PC-3 (cell line): ENCODE measurements at regions of chr12 and their contacts with region 1.

Region 1: GRCh38 chr12:110431957-110432587 is 18.1 kb downstream of the ARPC3 start:
- DNase-seq: no peak
- ATAC-seq: no peak
- H3K4me3 ChIP-seq: peak overlapping the region; percentile 78
- H3K27ac ChIP-seq: no peak overlapping the region
- H3K4me1 ChIP-seq: peaks cover 5% of the 10 kb centered on the region; the same call in 1 of the 2 replicates
- H3K27me3 ChIP-seq: no peaks in the 10 kb centered on the region
- CTCF ChIP-seq: no peak

Region 2: DNA sequence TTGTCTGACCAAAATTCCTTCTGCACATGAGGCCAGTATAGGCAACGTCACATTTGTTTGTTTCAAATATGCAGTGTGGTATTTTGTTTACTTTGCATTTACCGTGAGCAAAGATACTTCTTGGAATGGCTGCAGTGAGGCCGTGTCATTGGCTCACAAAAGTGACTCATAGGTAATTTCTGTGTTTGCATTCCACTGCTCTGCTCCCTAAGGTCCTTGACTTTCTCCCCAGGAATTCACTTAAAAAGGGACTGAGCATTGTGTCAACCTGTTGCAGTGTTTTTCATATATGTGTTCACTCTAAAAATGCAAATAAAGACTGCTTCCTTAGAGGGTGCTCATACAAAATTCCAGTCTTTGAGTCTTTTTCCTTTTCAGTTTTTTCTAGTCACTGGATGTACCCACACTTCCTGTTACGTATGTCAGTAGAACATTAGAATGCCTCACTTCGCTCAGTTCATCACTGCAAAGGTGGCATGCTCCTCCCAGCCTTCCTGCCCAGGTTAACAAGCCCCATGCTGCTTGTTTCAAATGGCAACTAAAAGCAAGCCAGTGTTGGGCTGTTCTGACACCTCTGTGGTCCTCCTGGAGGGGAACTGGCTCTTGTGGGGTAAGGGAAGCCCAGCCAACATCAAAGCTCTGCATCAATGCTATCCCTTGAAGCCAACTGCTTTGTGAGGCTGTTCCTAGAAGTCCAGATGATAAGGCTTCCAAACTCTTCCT is 392.8 kb before region 1 on chr12:
- CTCF ChIA-PET with region 1: interaction called, 6 read pairs
- POLR2A ChIA-PET with region 1: no interaction called
- intact Hi-C with region 1: loop called (anchors 5 kb)
- DNase-seq: peak; percentile 98
- ATAC-seq: peak; percentile 94
- H3K4me3 ChIP-seq: peak overlapping the region; percentile 43
- H3K27ac ChIP-seq: peak overlapping the region; percentile 92
- H3K4me1 ChIP-seq: peaks cover 31% of the 10 kb centered on the region
- H3K27me3 ChIP-seq: no peaks in the 10 kb centered on the region
- CTCF ChIP-seq: no peak

Region 3: GRCh38 chr12:110109037-110109836 is 322.8 kb before region 1 on chr12:
- CTCF ChIA-PET with region 1: interaction called, 14 read pairs
- POLR2A ChIA-PET with region 1: no interaction called
- intact Hi-C with region 1: no loop called
- DNase-seq: peak; percentile 96
- ATAC-seq: peak; percentile 94
- H3K4me3 ChIP-seq: peak overlapping the region; percentile 52
- H3K27ac ChIP-seq: peak overlapping the region; percentile 93
- H3K4me1 ChIP-seq: peaks cover 26% of the 10 kb centered on the region
- H3K27me3 ChIP-seq: no peaks in the 10 kb centered on the region
- CTCF ChIP-seq: no peak

Region 4: DNA sequence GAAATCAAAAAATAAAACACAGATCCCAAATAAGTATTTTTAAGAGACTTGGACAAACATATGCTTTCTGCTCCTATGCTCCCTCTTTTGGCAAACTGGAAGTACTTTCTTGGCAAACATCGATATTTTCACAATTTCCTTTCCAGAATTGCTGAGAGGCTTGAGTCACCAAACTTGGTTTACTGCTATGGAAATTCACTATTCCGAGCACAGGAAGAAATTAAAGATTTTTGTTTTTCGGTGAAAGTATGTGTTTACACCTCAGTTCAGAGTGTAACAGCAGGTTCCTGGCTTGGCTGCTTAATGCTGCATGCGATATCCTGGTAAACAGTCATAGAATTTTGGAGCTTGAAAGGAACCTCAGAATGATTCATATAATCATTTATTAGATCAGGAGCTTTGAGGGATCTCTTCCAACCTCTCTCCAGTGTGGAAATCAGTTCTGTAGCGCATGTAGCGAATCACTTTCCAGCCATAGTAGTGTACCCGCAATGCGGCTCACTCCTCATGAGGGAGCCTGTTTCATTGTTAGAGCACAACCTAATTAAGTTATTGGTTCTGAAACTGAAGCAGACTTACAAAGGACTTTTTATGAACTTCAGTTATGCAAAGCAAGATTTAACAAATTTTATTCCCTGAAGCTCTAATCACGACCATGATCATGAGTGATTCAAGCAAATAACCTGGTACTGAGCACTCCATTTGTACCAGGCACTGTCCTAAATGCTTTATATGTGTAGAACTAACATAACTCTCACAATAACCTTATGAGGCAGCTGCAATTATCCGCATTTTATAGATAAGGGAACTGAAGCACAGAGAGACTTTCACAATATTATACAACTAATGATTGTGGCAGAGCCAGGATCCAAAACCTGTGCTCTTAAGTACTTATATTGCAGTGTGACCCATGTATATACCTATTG is 207.4 kb before region 1 on chr12:
- CTCF ChIA-PET with region 1: interaction called, 11 read pairs
- POLR2A ChIA-PET with region 1: no interaction called
- intact Hi-C with region 1: no loop called
- DNase-seq: peak; percentile 91
- ATAC-seq: peak; percentile 65
- H3K4me3 ChIP-seq: peak overlapping the region; percentile 64
- H3K27ac ChIP-seq: peak overlapping the region; percentile 91
- H3K4me1 ChIP-seq: peaks cover 27% of the 10 kb centered on the region
- H3K27me3 ChIP-seq: no peaks in the 10 kb centered on the region
- CTCF ChIP-seq: peak; percentile 80

Region 5: GRCh38 chr12:110316861-110317260 is 115.2 kb before region 1 on chr12:
- CTCF ChIA-PET with region 1: no interaction called
- POLR2A ChIA-PET with region 1: interaction called, 13 read pairs
- intact Hi-C with region 1: no loop called
- DNase-seq: peak; percentile 17
- ATAC-seq: no peak; the same call in 1 of the 2 replicates
- H3K4me3 ChIP-seq: no peak overlapping the region
- H3K27ac ChIP-seq: no peak overlapping the region
- H3K4me1 ChIP-seq: peaks cover 27% of the 10 kb centered on the region
- H3K27me3 ChIP-seq: no peaks in the 10 kb centered on the region
- CTCF ChIP-seq: no peak

Region 6: GRCh38 chr12:110468212-110469048 is 36.4 kb after region 1 on chr12 and contains the starts of genes FAM216A and GPN3:
- CTCF ChIA-PET with region 1: interaction called, 25 read pairs
- POLR2A ChIA-PET with region 1: no interaction called
- intact Hi-C with region 1: no loop called
- DNase-seq: peak; percentile 99
- ATAC-seq: peak; percentile 84
- H3K4me3 ChIP-seq: peak within 1 kb of the TSS; percentile 84
- H3K27ac ChIP-seq: peak within 1 kb of the TSS; percentile 75
- H3K4me1 ChIP-seq: peaks cover 14% of the 10 kb centered on the region
- H3K27me3 ChIP-seq: no peaks in the 10 kb centered on the region
- CTCF ChIP-seq: no peak
- total RNA-seq, gene FAM216A: 19.5 and 27.8 TPM in 2 replicates
- total RNA-seq, gene GPN3: 31.4 and 32.5 TPM in 2 replicates